H1 (cell line): ENCODE measurements at regions of chr17 and their contacts with region 1.

Region 1: GRCh38 chr17:57009737-57010445 is 32.0 kb downstream of the SCPEP1 start:
- DNase-seq: peak; percentile 50 to 74
- H3K4me3 ChIP-seq: no peak overlapping the region
- H3K27ac ChIP-seq: no peak overlapping the region
- H3K4me1 ChIP-seq: peaks cover 0 to 10% (median 3%) of the 10 kb centered on the region in 4 experiments; a peak in 4 of 7 replicates
- H3K27me3 ChIP-seq: no peaks in the 10 kb centered on the region
- CTCF ChIP-seq: peak; percentile 69 to 85 (median 70)
- EP300 ChIP-seq: no peak
- POLR2A ChIP-seq: no peak
- RAD21 ChIP-seq: peak; percentile 59 to 70

Region 2: DNA sequence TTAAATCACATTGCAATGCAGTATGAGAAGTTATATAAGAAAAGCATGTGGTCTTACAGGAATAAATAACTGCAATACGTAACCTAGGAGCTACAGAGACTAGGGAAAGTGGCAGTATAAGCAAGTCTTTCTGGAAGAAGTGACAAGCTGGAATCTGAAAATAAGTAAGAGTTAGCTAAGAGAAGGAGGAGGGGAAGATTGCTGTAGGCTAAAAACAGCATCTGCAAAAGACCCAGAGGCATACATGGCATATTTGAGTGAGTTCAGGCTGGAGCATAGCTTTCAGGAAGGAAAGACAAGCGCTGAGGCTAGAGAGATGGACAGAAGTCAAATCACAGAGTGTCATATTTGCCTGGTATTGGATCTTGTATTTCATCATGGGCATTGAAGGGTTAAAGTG is 149.3 kb before region 1 on chr17:
- CTCF ChIA-PET with region 1: no interaction called
- POLR2A ChIA-PET with region 1: no interaction called
- DNase-seq: no peak
- H3K4me3 ChIP-seq: no peak overlapping the region
- H3K27ac ChIP-seq: no peak overlapping the region
- H3K4me1 ChIP-seq: no peaks in the 10 kb centered on the region; a peak in 2 of 7 replicates
- H3K27me3 ChIP-seq: no peaks in the 10 kb centered on the region
- CTCF ChIP-seq: no peak
- EP300 ChIP-seq: no peak
- POLR2A ChIP-seq: no peak
- RAD21 ChIP-seq: no peak

Region 3: DNA sequence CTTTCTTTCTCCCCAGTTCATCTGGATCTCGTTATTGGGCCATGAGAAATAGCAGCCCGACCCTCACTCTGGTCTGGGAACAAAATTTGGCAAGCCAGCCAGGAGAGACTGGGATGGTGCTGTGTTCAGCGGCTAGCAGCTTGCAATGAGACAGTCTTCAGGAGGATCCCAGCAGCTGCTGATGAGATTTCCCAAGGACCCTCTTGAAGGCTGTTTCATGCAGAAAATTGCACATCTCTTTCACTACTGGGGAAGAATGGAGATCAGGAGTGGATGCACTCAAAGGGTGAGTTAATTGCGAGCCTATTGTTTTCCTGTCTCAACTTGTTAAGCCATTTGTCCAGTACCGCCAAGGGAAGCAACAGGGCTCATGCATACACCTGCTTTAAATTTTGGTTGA is 43.6 kb before region 1 on chr17:
- CTCF ChIA-PET with region 1: no interaction called
- POLR2A ChIA-PET with region 1: no interaction called
- DNase-seq: no peak
- H3K4me3 ChIP-seq: no peak overlapping the region
- H3K27ac ChIP-seq: no peak overlapping the region
- H3K4me1 ChIP-seq: no peaks in the 10 kb centered on the region
- H3K27me3 ChIP-seq: no peaks in the 10 kb centered on the region
- CTCF ChIP-seq: no peak
- EP300 ChIP-seq: no peak
- POLR2A ChIP-seq: no peak
- RAD21 ChIP-seq: no peak

Region 4: GRCh38 chr17:56977673-56978395 is 32.1 kb before region 1 on chr17 and contains the start of gene SCPEP1:
- CTCF ChIA-PET with region 1: interaction called, 13 read pairs
- POLR2A ChIA-PET with region 1: no interaction called
- DNase-seq: peak; percentile 73 to 84
- H3K4me3 ChIP-seq: peak within 1 kb of the TSS; percentile 69 to 89 (median 78)
- H3K27ac ChIP-seq: no peak within 1 kb of the TSS
- H3K4me1 ChIP-seq: peaks cover 0 to 12% (median under 1%) of the 10 kb centered on the region in 4 experiments; a peak in 4 of 7 replicates
- H3K27me3 ChIP-seq: no peaks in the 10 kb centered on the region
- CTCF ChIP-seq: no peak
- EP300 ChIP-seq: no peak
- POLR2A ChIP-seq: peak; percentile 59 to 74; a peak in 2 of 3 replicates
- RAD21 ChIP-seq: no peak
- total RNA-seq, gene SCPEP1: 48.8 and 52.6 TPM in 2 replicates

Region 5: DNA sequence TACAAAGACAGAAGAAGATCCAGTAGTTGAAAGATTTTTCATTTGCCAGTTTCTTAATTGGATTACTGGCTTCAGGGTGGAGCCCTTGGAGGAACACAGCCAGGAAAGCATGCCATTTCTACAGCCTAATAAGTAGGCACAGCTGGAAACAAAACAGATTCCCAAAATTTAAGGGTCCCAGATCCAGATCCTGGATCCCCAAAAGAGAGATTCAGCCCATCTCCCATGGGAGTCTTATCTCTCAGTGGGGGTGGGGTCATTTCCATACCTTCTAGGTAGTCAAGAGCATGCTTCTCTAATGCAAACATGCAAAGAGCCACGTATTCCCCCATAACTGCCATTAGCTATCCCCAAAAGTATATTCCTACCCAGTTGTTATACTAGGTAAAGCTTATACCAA is 18.0 kb after region 1 on chr17:
- CTCF ChIA-PET with region 1: interaction called, 16 read pairs
- POLR2A ChIA-PET with region 1: interaction called, 3 read pairs
- DNase-seq: no peak
- H3K4me3 ChIP-seq: no peak overlapping the region
- H3K27ac ChIP-seq: no peak overlapping the region
- H3K4me1 ChIP-seq: peaks cover 0 to 5% (median 0%) of the 10 kb centered on the region in 4 experiments; a peak in 2 of 7 replicates
- H3K27me3 ChIP-seq: no peaks in the 10 kb centered on the region
- CTCF ChIP-seq: no peak
- EP300 ChIP-seq: no peak
- POLR2A ChIP-seq: no peak
- RAD21 ChIP-seq: no peak

Region 6: DNA sequence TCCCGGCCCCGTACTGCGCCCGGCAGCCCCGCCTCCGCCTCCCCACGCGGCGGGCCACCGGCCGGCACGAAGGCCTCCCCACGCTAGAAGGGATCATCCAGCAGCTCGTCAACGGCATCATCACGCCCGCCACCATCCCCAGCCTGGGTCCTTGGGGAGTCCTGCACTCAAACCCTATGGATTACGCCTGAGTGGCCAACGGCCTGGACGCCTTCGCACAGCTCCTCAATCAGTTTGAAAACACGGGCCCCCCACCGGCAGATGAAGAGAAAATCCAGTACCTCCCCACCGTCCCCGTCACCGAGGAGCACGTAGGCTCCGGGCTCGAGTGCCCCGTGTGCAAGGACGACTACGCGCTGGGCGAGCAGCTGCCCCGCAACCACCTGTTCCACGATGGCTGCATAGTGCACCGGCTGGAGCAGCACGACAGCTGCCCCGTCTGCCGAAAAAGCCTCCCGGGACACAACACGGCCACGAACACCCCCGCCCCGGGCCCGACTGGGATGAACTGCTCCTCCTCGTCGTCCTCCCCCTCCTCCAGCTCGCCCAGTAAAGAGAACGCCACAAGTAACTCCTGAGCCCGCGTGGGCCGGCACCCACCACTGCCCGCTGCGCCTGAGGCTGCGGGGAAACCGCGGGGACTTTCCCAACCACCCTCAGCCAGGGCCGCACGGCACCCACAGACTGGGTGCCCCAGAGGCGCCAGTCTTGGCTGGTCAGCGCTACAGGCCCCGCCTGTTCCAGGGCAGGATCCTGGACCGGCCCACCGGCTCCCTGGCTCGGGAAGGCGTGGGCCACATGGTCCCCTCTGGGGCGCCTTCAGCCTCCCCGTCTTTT is 36.2 kb after region 1 on chr17:
- CTCF ChIA-PET with region 1: interaction called, 37 read pairs
- POLR2A ChIA-PET with region 1: no interaction called
- DNase-seq: no peak
- H3K4me3 ChIP-seq: no peak overlapping the region
- H3K27ac ChIP-seq: no peak overlapping the region
- H3K4me1 ChIP-seq: peaks cover 0 to 2% (median under 1%) of the 10 kb centered on the region in 4 experiments; a peak in 2 of 7 replicates
- H3K27me3 ChIP-seq: no peaks in the 10 kb centered on the region
- CTCF ChIP-seq: no peak
- EP300 ChIP-seq: no peak
- POLR2A ChIP-seq: no peak
- RAD21 ChIP-seq: no peak

Region 7: DNA sequence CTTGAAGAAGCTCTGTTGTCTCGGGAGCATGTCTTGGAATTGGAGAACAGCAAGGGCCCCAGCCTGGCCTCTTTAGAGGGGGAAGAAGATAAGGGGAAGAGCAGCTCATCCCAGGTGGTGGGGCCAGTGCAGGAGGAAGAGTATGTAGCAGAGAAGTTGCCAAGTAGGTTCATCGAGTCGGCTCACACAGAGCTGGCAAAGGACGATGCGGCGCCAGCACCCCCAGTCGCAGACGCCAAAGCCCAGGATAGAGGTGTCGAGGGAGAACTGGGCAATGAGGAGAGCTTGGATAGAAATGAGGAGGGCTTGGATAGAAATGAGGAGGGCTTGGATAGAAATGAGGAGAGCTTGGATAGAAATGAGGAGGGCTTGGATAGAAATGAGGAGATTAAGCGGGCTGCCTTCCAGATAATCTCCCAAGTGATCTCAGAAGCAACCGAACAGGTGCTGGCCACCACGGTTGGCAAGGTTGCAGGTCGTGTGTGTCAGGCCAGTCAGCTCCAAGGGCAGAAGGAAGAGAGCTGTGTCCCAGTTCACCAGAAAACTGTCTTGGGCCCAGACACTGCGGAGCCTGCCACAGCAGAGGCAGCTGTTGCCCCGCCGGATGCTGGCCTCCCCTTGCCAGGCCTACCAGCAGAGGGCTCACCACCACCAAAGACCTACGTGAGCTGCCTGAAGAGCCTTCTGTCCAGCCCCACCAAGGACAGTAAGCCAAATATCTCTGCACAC is 96.4 kb after region 1 on chr17:
- CTCF ChIA-PET with region 1: interaction called, 112 read pairs
- POLR2A ChIA-PET with region 1: no interaction called
- DNase-seq: peak in 1 of 2 experiments; percentile 70
- H3K4me3 ChIP-seq: no peak overlapping the region
- H3K27ac ChIP-seq: no peak overlapping the region
- H3K4me1 ChIP-seq: peaks cover 4 to 33% (median 18%) of the 10 kb centered on the region in 4 experiments; a peak in 6 of 7 replicates
- H3K27me3 ChIP-seq: no peaks in the 10 kb centered on the region
- CTCF ChIP-seq: peak; percentile 45 to 80 (median 79)
- EP300 ChIP-seq: no peak
- POLR2A ChIP-seq: no peak
- RAD21 ChIP-seq: peak; percentile 36 to 55